Aorta (tissue), 5 donors: ENCODE measurements at regions of chr1 and their contacts with region 1.

Region 1: GRCh38 chr1:225809842-225810578 is at the start of gene EPHX1:
- DNase-seq: peak; percentile 94 to 97
- ATAC-seq: peak; percentile 91
- H3K4me3 ChIP-seq: peak within 1 kb of the TSS; percentile 82
- H3K27ac ChIP-seq: peak within 1 kb of the TSS in 1 of 2 donors; percentile 30
- H3K4me1 ChIP-seq: no peaks in the 10 kb centered on the region
- H3K27me3 ChIP-seq: no peaks in the 10 kb centered on the region
- total RNA-seq, gene EPHX1: 57.6 to 153 TPM

Region 2: GRCh38 chr1:224609333-224609732 is 1200.7 kb before region 1 on chr1:
- intact Hi-C with region 1: no loop called
- DNase-seq: no peak
- ATAC-seq: no peak
- H3K4me3 ChIP-seq: no peak overlapping the region
- H3K27ac ChIP-seq: no peak overlapping the region
- H3K4me1 ChIP-seq: no peaks in the 10 kb centered on the region
- H3K27me3 ChIP-seq: no peaks in the 10 kb centered on the region

Region 3: DNA sequence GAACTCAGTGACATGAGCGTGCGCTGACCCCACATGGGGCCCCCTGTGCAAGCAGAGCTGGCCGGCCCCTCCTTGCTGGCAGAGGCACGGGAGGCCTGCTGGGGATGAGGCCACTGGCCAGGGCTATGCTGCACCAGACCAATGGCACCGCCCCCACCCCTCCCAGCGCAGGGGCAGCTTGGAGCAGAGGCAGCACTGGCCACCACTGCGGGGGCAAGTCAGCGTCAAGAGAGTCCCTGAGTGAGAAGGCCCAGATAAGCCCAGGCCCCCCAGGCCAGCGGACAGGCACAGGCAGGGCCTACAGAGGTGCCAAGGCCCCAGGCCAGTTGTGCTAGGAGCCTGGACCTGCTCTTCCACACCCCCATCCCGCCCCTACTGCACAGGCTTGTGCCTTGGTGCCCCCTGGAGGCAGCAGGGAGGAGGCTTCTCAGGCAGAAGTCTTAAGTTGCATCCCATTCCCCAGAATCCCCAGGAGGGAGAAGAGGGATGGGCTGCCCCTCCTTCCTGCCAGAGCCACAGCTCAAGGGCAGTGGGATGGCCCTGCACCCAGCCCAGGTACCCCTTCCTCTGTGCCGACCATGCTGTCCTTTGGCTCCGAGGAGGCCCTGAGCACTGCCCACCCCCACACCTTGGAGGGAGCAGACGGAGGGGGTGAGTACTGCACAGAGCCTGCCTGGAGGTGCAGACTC is 35.7 kb after region 1 on chr1:
- intact Hi-C with region 1: loop called in 1 of 2 experiments (anchors 5 kb)
- DNase-seq: peak; percentile 86 to 92
- ATAC-seq: peak; percentile 89
- H3K4me3 ChIP-seq: no peak overlapping the region
- H3K27ac ChIP-seq: peak overlapping the region in 1 of 2 donors; percentile 0
- H3K4me1 ChIP-seq: no peaks in the 10 kb centered on the region
- H3K27me3 ChIP-seq: no peaks in the 10 kb centered on the region

Region 4: GRCh38 chr1:225999227-225999911 is 189.4 kb after region 1 on chr1 and contains the start of gene SDE2:
- intact Hi-C with region 1: loop called in 1 of 2 experiments (anchors 10 kb)
- DNase-seq: peak; percentile 100
- ATAC-seq: peak; percentile 99
- H3K4me3 ChIP-seq: peak within 1 kb of the TSS; percentile 79 to 87
- H3K27ac ChIP-seq: peak within 1 kb of the TSS; percentile 85 to 100
- H3K4me1 ChIP-seq: no peaks in the 10 kb centered on the region
- H3K27me3 ChIP-seq: no peaks in the 10 kb centered on the region
- total RNA-seq, gene SDE2: 15.7 to 18.3 TPM